ENCODE measurements at regions of chr7 and their contacts with region 1.

Region 1: DNA sequence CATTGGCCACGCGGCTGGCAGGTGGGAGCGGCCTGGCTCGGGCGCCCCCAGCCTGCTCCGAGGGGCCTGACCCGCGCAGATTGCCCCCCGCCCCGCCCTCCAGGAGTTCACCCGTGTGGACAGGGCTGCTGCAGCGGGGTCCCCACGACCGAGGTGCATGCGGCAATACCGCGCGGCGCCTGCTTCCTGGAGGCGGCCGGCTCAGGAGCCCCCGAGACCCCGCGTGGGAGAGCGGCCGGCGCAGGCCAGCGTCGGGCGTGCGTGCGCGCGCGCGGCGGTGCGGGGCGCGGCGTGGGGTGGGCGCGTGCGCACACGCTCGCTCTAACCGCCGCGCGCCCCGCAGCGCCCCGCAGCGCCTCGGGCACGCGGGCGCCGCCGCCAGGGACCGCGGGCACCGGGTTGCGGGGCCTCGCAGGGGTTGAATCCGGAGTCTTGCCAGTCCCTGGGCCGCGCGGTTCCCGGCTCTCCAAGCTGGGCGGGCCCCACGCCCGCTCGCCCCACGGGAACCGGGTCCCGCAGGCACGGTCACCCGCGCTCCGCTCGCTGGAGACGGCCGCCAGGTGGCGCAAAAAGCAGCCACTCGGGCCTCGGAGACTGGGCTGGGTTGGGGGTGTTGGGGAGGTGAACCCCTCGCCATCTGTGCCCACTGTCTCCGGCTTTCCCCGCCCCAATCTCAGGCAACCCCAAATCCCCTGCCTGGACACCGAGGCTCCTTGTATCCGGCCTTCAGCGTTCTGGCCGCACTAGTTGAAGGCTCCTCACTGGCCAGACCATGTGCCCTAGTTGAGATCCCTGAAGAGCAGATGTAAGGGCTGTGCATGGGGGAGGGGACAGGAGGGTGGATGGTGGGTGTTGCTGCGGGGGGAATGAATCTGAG is 1.3 kb upstream of the ACHE start:
- DNase-seq: no peak
- ATAC-seq: peak; percentile 54
- H3K4me3 ChIP-seq: no peak overlapping the region; the same call in 1 of the 2 replicates
- H3K27ac ChIP-seq: no peak overlapping the region
- H3K4me1 ChIP-seq: no peaks in the 10 kb centered on the region; the same call in 1 of the 2 replicates
- H3K27me3 ChIP-seq: peaks cover 41% of the 10 kb centered on the region
- CTCF ChIP-seq: peak; percentile 63
- POLR2A ChIP-seq: no peak
- RAD21 ChIP-seq: peak; percentile 57

Region 2: DNA sequence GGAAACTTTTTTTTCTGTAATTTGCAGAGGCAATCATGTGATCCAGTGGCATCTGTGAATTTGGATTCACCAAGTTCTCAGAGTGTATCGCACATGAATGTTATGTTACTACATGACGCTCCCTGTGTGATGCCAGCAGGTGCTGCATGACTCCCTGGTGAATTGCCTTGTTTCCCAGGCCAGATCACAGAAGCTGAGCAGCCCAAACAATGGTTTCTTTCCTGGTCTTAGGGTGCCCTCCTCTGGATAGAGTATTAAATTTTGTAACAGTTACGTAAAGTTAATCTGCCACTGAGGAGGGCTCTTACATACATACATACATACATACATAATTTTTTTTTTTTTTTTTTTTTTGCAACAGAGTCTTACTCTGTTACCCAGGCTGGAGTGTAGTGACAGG is 843.8 kb before region 1 on chr7:
- CTCF ChIA-PET with region 1: no interaction called
- POLR2A ChIA-PET with region 1: no interaction called
- dilution Hi-C with region 1: no loop called
- in situ Hi-C with region 1: no loop called
- intact Hi-C with region 1: no loop called
- DNase-seq: peak; percentile 86
- ATAC-seq: peak; percentile 53
- H3K4me3 ChIP-seq: no peak overlapping the region
- H3K27ac ChIP-seq: no peak overlapping the region
- H3K4me1 ChIP-seq: peaks cover 4% of the 10 kb centered on the region; the same call in 1 of the 2 replicates
- H3K27me3 ChIP-seq: no peaks in the 10 kb centered on the region
- CTCF ChIP-seq: peak; percentile 58
- POLR2A ChIP-seq: no peak
- RAD21 ChIP-seq: peak; percentile 81

Region 3: DNA sequence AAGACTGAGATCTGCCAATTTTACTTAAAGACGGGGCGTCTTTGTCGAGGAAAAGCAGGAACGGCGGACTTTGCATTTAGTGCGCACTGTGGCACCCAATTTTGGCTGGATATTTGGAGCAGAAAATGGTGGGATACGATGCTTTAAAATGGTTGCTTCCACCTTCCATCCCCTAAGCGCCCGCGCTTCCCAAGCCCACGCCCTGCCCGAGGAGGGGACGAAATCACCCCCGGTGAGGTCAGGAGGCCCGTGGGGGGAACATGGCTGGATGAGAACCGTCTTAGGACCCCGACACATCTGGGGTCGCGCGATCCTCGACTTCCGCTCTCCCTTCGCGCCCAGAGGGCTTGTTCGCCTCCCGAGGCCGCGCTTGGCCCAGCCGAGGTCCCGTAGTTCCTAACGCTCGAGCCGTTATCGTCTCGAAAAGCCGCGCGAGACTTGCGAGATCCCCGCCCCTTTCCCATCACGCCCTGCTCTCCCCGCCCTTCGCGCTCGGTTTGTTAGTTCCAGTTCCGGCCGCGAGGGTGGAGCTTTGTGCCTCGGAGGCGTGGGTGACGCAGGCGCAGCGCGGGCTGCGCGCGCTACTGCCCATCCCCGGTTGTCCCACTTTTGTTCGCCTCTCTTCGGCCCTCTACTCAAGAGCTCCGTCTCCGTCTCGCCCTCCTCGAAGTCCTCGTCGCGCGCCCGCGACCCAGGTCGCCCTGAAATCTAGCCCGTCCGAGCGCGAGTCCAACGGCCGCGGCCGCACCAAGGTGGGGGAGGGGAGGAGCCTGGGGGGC is 22.2 kb before region 1 on chr7 and contains the start of gene SRRT:
- CTCF ChIA-PET with region 1: no interaction called
- POLR2A ChIA-PET with region 1: interaction called, 13 read pairs
- dilution Hi-C with region 1: no loop called
- in situ Hi-C with region 1: no loop called
- intact Hi-C with region 1: no loop called
- DNase-seq: peak; percentile 97
- ATAC-seq: peak; percentile 98
- H3K4me3 ChIP-seq: peak within 1 kb of the TSS; percentile 76
- H3K27ac ChIP-seq: peak within 1 kb of the TSS; percentile 99
- H3K4me1 ChIP-seq: peaks cover 9% of the 10 kb centered on the region
- H3K27me3 ChIP-seq: no peaks in the 10 kb centered on the region
- CTCF ChIP-seq: 0 out of 2 replicates have a peak, but pooled peaks have one; percentile 24
- POLR2A ChIP-seq: peak; percentile 93
- RAD21 ChIP-seq: no peak
- total RNA-seq, gene SRRT: 41.4 and 45.3 TPM in 2 replicates

Region 4: DNA sequence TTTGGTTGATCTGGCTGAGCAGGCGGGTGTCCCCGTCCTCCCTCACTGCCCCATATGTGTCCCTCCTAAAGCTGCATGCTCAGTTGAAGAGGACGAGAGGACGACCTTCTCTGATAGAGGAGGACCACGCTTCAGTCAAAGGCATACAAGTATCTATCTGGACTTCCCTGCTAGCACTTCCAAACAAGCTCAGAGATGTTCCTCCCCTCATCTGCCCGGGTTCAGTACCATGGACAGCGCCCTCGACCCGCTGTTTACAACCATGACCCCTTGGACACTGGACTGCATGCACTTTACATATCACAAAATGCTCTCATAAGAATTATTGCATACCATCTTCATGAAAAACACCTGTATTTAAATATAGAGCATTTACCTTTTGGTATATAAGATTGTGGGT is 161.4 kb after region 1 on chr7:
- CTCF ChIA-PET with region 1: interaction called, 5 read pairs
- POLR2A ChIA-PET with region 1: interaction called, 3 read pairs
- dilution Hi-C with region 1: no loop called
- in situ Hi-C with region 1: loop called (anchors 5 kb)
- intact Hi-C with region 1: loop called (anchors 1 kb)
- DNase-seq: peak; percentile 50
- ATAC-seq: peak; percentile 74
- H3K4me3 ChIP-seq: no peak overlapping the region
- H3K27ac ChIP-seq: no peak overlapping the region
- H3K4me1 ChIP-seq: no peaks in the 10 kb centered on the region
- H3K27me3 ChIP-seq: peaks cover 25% of the 10 kb centered on the region
- CTCF ChIP-seq: no peak
- POLR2A ChIP-seq: no peak
- RAD21 ChIP-seq: no peak

Region 5: DNA sequence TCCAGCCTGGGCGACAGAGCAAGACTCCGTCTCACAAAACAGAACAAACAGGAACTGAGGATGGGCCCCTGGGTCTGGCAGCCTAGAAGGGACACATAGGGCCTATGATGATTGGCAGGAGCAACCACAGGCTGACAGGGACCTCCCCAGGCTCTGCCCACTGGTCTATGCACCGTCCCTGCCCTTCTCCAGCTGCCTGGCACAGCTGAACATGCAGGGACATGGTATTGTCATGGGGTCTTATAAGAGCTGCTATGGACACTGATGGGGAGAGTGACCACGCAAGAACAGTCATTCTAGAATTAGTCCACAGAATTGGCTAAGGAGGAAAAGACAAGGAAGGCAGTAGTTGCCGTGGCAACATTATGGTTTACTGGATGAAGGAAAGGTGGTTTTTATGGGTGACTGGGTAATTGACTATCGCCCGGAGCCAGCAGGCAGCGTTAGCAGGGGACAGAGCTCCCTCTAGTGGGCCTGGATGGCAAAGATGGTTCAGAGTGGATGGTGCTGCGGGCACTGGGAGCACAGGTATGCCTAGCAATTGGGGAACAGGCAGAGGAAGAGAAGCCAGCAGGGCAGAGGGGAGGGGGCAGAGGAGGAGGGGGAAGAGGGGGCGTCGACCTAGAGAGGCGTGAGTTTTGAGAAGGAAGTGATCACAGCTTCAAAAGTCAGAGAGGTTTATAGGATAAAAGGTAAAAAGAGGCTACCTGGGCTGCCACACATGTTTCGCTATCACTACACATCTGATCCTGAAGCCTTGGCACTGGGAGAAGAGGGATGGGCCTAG is 180.5 kb after region 1 on chr7:
- CTCF ChIA-PET with region 1: no interaction called
- POLR2A ChIA-PET with region 1: no interaction called
- dilution Hi-C with region 1: no loop called
- in situ Hi-C with region 1: no loop called
- intact Hi-C with region 1: loop called (anchors 1 kb)
- DNase-seq: peak; percentile 64
- ATAC-seq: peak; percentile 100
- H3K4me3 ChIP-seq: no peak overlapping the region
- H3K27ac ChIP-seq: no peak overlapping the region
- H3K4me1 ChIP-seq: no peaks in the 10 kb centered on the region
- H3K27me3 ChIP-seq: peaks cover 11% of the 10 kb centered on the region
- CTCF ChIP-seq: peak; percentile 88
- POLR2A ChIP-seq: no peak
- RAD21 ChIP-seq: peak; percentile 93